ENCODE measurements at regions of chr16 and their contacts with region 1.

Region 1: GRCh38 chr16:4570086-4570485 is 13.9 kb downstream of the C16orf96 start:
- H3K4me3 ChIP-seq: no peak overlapping the region
- H3K27ac ChIP-seq: no peak overlapping the region
- H3K4me1 ChIP-seq: no peaks in the 10 kb centered on the region
- CTCF ChIP-seq: no peak

Region 2: DNA sequence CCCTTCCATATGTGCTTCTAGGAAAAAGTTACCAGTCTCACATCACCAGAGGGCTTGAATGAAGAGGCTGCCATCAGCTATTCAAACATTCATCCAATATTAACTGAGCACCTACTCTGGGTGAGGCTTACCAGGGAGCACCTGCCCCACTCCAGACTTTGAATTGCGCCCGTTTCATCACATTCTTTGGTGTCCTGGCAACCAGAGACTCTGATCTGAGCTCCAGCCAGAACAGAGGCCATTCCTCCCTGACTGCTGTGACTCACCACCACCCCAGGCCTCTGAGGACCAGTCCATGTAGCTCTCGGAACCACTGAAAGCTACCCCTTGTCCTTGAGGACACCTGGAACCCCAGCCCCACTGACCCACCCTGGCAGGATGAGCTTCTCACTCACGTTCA is 14.0 kb before region 1 on chr16 and contains the start of gene C16orf96:
- CTCF ChIA-PET with region 1: interaction called, 3 read pairs
- POLR2A ChIA-PET with region 1: interaction called, 11 read pairs
- H3K4me3 ChIP-seq: no peak within 1 kb of the TSS
- H3K27ac ChIP-seq: no peak within 1 kb of the TSS
- H3K4me1 ChIP-seq: no peaks in the 10 kb centered on the region
- CTCF ChIP-seq: no peak